Psoas muscle (tissue), 8 donors: ENCODE measurements at regions of chr9 and their contacts with region 1.

Region 1: DNA sequence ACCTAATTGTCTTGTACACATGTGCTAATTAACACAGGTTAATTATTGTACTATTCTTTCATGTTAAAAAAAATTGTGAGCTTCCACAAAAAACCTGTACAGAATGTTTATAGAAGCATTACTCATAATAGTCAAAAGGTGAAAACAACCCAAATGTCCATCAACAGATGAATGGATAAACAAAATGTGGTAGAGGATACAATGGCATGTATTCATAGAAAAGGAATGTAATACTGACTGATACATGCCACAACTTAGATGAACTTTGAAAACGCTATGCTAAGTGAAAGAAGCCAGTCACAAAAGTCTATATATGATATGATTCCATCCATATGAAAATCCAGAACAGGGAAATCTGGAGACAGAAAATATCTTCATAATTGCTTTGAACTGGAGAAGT is 25.6 kb downstream of the RRAGA start:
- DNase-seq: no peak
- ATAC-seq: peak in 1 of 4 donors; percentile 51
- H3K4me3 ChIP-seq: no peak overlapping the region
- H3K27ac ChIP-seq: no peak overlapping the region
- H3K4me1 ChIP-seq: no peaks in the 10 kb centered on the region
- H3K27me3 ChIP-seq: no peaks in the 10 kb centered on the region
- CTCF ChIP-seq: no peak

Region 2: GRCh38 chr9:19358701-19359100 is 283.9 kb after region 1 on chr9:
- intact Hi-C with region 1: loop called in 1 of 2 experiments (anchors 10 kb)
- DNase-seq: no peak
- ATAC-seq: no peak
- H3K4me3 ChIP-seq: no peak overlapping the region
- H3K27ac ChIP-seq: no peak overlapping the region
- H3K4me1 ChIP-seq: no peaks in the 10 kb centered on the region
- H3K27me3 ChIP-seq: no peaks in the 10 kb centered on the region
- CTCF ChIP-seq: no peak

Region 3: DNA sequence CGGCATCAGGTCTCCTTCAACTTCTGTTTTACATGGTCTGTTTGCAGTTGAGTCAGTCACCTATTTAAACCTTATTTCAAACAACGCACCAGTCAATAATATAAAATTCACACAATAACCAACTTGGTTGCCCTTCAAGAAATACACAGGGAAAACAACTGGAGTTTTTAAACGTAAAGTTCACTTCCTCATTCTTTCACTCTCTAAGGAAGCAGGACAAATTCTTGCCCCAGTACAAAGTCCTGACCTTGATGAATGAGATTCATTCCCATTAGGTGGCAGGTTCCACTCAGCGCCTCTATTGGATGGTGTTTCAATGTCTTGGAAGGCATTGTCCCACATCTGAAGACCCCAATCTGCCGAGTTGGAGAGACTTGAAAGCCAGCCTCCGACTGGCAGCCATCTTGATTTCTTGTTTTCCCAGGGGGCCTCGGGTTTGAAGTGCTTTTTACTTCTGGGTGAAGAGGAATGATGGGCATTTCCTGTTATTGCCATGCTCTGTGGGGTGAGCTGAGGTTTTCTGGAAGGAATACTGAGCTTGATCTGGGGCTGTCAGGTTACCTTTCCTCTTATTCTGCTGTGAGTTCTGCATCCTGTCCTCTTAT is 438.9 kb after region 1 on chr9:
- intact Hi-C with region 1: no loop called
- DNase-seq: no peak
- ATAC-seq: no peak
- H3K4me3 ChIP-seq: no peak overlapping the region
- H3K27ac ChIP-seq: no peak overlapping the region
- H3K4me1 ChIP-seq: no peaks in the 10 kb centered on the region
- H3K27me3 ChIP-seq: no peaks in the 10 kb centered on the region
- CTCF ChIP-seq: no peak